Right ventricle myocardium superior (tissue), 1 donor: ENCODE measurements at regions of chr4 and their contacts with region 1.

Region 1: DNA sequence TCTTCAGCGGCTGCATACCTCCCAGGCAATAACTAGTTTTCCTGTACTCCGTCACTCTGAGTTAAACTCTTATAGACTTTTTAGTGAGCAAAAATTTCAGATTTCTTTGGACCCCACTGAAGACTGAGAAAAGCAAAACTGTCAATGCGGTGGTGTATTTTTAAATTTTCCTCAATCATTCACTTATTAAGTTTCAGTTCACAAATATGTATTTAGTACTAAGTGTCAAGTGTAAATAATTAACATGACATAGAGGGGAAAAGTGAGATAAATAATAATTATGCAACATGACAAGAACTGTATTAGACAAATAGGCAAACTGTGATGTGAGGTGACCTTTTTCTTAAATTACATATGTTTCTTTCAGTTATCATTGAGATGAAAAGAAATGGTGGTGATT is 124.4 kb downstream of the NAF1 start:
- DNase-seq: no peak
- ATAC-seq: no peak

Region 2: GRCh38 chr4:162645381-162645780 is 396.9 kb before region 1 on chr4:
- intact Hi-C with region 1: loop called (anchors 5 kb)
- DNase-seq: no peak
- ATAC-seq: no peak